Activated CD4-positive, alpha-beta T cell treated with anti-CD3 and anti-CD28 coated beads for 36 hours (primary cell): ENCODE measurements at regions of chr21 and their contacts with region 1.

Region 1: GRCh38 chr21:34707876-34708325 is 39.1 kb downstream of the CLIC6 start:
- DNase-seq: peak; percentile 83
- ATAC-seq: peak; percentile 94
- H3K4me3 Mint-ChIP-seq: no peak overlapping the region
- H3K27ac Mint-ChIP-seq: peak overlapping the region; percentile 49
- H3K4me1 Mint-ChIP-seq: peaks cover 26% of the 10 kb centered on the region
- H3K27me3 Mint-ChIP-seq: peaks cover 16% of the 10 kb centered on the region

Region 2: DNA sequence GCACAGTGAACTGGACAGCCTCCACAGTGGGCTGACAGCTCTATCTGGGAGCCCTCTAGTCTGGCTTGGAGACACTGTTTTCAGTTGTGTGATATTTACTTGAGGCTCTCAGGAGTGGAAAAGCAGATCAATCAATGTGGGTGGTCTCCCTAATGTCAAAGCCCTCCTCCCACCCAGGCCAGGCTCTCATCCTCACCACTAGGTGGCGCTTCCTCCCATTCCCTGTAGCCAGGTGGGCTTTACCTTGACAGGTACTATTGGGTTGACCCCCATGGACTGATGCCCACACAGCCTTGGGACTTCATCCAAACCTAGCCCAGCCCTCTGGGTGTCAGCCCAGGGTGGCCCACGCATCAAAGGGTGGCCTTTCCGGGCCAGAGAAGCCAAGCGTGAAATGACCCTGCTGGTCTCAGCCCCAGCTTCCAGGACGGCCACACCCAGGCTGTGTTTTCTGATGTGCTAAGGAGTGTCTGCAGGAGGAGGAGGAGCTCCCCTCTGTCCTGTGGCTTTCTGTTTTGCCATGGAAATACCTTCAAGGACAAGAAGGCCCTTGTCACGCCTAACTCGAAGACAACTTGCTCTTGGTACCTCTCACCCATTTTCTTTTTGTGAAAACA is 14.9 kb after region 1 on chr21:
- CTCF ChIA-PET with region 1: interaction called, 33 read pairs
- POLR2A ChIA-PET with region 1: no interaction called
- intact Hi-C with region 1: no loop called
- DNase-seq: peak; percentile 49
- ATAC-seq: no peak
- H3K4me3 Mint-ChIP-seq: no peak overlapping the region
- H3K27ac Mint-ChIP-seq: no peak overlapping the region
- H3K4me1 Mint-ChIP-seq: no peaks in the 10 kb centered on the region
- H3K27me3 Mint-ChIP-seq: peaks cover 4% of the 10 kb centered on the region

Region 3: GRCh38 chr21:34737107-34737506 is 29.2 kb after region 1 on chr21:
- CTCF ChIA-PET with region 1: no interaction called
- POLR2A ChIA-PET with region 1: no interaction called
- intact Hi-C with region 1: no loop called
- DNase-seq: no peak
- ATAC-seq: no peak
- H3K4me3 Mint-ChIP-seq: no peak overlapping the region
- H3K27ac Mint-ChIP-seq: no peak overlapping the region
- H3K4me1 Mint-ChIP-seq: no peaks in the 10 kb centered on the region
- H3K27me3 Mint-ChIP-seq: peaks cover 3% of the 10 kb centered on the region

Region 4: DNA sequence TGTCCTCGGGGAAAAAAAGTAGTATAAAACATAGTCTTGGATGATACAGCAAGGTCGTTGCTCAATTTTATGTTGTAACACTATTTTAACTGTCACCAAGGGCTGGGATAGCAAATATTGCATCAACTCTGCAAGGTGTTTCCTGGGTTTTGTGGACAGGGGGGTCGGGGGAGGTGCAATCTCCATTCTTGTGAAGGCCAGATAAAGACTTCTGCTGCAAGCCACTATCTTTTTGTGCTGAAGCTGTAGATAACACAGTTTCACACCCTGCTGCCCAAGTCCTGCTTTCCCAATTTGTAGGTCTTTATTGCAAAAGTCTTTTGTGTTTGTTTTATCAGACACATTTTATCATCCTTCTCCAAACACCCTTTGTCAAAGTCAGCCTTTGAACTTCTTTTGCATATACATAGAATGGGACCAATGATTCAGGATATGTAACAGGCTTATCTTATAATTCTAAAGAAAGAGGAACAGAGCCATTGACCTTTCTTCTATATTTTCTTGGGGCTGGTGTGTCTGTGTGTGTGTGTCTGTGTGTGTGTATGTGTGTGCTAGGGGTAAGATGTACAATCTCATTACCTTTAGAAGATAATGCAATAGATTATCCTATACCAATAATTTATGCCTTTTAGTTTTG is 200.6 kb after region 1 on chr21:
- CTCF ChIA-PET with region 1: no interaction called
- POLR2A ChIA-PET with region 1: no interaction called
- intact Hi-C with region 1: no loop called
- DNase-seq: no peak
- ATAC-seq: no peak
- H3K4me3 Mint-ChIP-seq: no peak overlapping the region
- H3K27ac Mint-ChIP-seq: no peak overlapping the region
- H3K4me1 Mint-ChIP-seq: peaks cover 81% of the 10 kb centered on the region
- H3K27me3 Mint-ChIP-seq: no peaks in the 10 kb centered on the region

Region 5: DNA sequence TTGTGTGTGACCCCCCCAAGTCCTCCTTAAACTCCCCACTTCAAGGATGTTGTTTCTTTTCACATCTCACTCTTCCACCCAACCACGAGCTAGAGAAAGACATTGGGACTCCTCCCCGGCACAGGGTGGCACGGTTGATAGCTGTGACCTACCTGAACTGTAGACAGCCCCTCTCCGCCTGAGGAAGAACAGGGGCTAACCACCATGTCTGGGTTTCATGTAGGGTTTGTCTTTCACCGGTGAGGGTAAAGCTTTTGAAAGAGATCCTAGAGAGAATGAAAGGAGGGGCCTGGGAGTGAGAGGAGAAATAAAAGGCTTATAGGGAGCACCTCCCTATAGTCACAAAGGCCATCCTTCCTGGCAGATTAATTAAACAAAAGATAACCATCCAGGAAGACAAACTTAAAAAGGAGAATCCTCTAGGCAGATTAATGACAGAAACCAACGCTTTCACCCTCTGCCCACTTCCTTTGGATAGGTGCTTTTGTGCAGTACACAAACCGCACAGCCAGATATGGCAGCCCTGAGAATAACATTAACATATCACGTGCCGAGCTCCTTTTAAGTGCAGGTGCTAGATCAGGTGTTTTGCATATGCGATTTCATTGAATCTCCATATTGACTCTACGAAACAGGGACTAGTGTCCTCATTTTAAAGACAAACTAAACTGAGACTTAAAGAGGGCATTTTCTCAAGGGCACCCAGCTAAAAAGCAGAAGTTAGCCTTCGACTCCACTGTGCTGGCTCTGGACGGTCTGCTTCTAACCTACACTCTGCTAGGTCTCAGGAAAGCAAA is 519.2 kb after region 1 on chr21:
- CTCF ChIA-PET with region 1: no interaction called
- POLR2A ChIA-PET with region 1: no interaction called
- intact Hi-C with region 1: loop called in 1 of 2 experiments (anchors 5 kb)
- DNase-seq: peak; percentile 73
- ATAC-seq: peak; percentile 83
- H3K4me3 Mint-ChIP-seq: peak overlapping the region; percentile 45
- H3K27ac Mint-ChIP-seq: peak overlapping the region; percentile 85
- H3K4me1 Mint-ChIP-seq: peaks cover 37% of the 10 kb centered on the region
- H3K27me3 Mint-ChIP-seq: no peaks in the 10 kb centered on the region

Region 6: GRCh38 chr21:35754583-35754982 is 1046.7 kb after region 1 on chr21:
- CTCF ChIA-PET with region 1: no interaction called
- POLR2A ChIA-PET with region 1: no interaction called
- intact Hi-C with region 1: no loop called
- DNase-seq: no peak
- ATAC-seq: no peak
- H3K4me3 Mint-ChIP-seq: no peak overlapping the region
- H3K27ac Mint-ChIP-seq: no peak overlapping the region
- H3K4me1 Mint-ChIP-seq: no peaks in the 10 kb centered on the region
- H3K27me3 Mint-ChIP-seq: peaks cover 36% of the 10 kb centered on the region